ENCODE measurements at regions of chr20 and their contacts with region 1.

Region 1: GRCh38 chr20:60210779-60211617 is 252.8 kb downstream of the CDH26 start:
- DNase-seq: peak in 4 of 5 donors; percentile 20 to 40 (median 30)
- H3K4me3 ChIP-seq: no peak overlapping the region
- H3K4me3 Mint-ChIP-seq: peak overlapping the region in 1 of 8 donors; percentile 17
- H3K27ac ChIP-seq: no peak overlapping the region
- H3K27ac Mint-ChIP-seq: peak overlapping the region in 1 of 7 donors; percentile 46
- H3K4me1 ChIP-seq: no peaks in the 10 kb centered on the region
- H3K4me1 Mint-ChIP-seq: peaks cover 0 to 6% (median 3%) of the 10 kb centered on the region in 4 donors
- H3K27me3 ChIP-seq: no peaks in the 10 kb centered on the region
- H3K27me3 Mint-ChIP-seq: peaks cover 0 to 7% of the 10 kb centered on the region in 2 donors

Region 2: DNA sequence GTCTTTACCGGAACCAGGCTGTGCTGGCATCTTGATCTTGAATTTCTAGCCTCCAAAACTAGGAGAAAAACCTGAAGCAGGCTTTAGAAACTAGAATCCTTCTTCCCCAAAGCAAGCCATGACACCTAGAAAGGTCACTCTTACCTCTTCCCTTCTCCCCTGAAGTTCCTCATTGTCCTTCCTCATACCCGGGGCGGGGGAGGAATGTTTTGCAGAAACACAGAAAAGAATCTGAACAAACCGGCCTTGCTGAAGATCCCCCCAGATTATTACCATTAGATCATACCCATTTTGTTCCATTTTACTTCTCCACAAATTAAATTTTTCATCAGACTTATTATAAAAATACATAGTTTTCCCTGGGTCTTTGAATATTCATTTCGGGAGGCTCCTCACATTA is 20.9 kb before region 1 on chr20:
- CTCF ChIA-PET with region 1: no interaction called
- POLR2A ChIA-PET with region 1: no interaction called
- intact Hi-C with region 1: no loop called
- DNase-seq: no peak
- H3K4me3 ChIP-seq: no peak overlapping the region
- H3K4me3 Mint-ChIP-seq: no peak overlapping the region
- H3K27ac ChIP-seq: no peak overlapping the region
- H3K27ac Mint-ChIP-seq: no peak overlapping the region
- H3K4me1 ChIP-seq: no peaks in the 10 kb centered on the region
- H3K4me1 Mint-ChIP-seq: no peaks in the 10 kb centered on the region
- H3K27me3 ChIP-seq: no peaks in the 10 kb centered on the region
- H3K27me3 Mint-ChIP-seq: no peaks in the 10 kb centered on the region

Region 3: GRCh38 chr20:60262967-60263603 is 52.1 kb after region 1 on chr20:
- CTCF ChIA-PET with region 1: interaction called, 17 read pairs
- POLR2A ChIA-PET with region 1: no interaction called
- intact Hi-C with region 1: loop called (anchors 2 kb)
- DNase-seq: peak in 4 of 5 donors; percentile 46 to 56 (median 50)
- H3K4me3 ChIP-seq: no peak overlapping the region
- H3K4me3 Mint-ChIP-seq: no peak overlapping the region
- H3K27ac ChIP-seq: no peak overlapping the region
- H3K27ac Mint-ChIP-seq: peak overlapping the region in 2 of 7 donors; percentile 19 to 38
- H3K4me1 ChIP-seq: peaks cover 18% of the 10 kb centered on the region
- H3K4me1 Mint-ChIP-seq: peaks cover 1 to 26% (median 14%) of the 10 kb centered on the region in 4 donors
- H3K27me3 ChIP-seq: no peaks in the 10 kb centered on the region
- H3K27me3 Mint-ChIP-seq: no peaks in the 10 kb centered on the region

Region 4: GRCh38 chr20:61230166-61230565 is 1019.2 kb after region 1 on chr20:
- CTCF ChIA-PET with region 1: interaction called, 13 read pairs
- POLR2A ChIA-PET with region 1: no interaction called
- intact Hi-C with region 1: no loop called
- DNase-seq: no peak
- H3K4me3 ChIP-seq: no peak overlapping the region
- H3K4me3 Mint-ChIP-seq: no peak overlapping the region
- H3K27ac ChIP-seq: no peak overlapping the region
- H3K27ac Mint-ChIP-seq: no peak overlapping the region
- H3K4me1 ChIP-seq: no peaks in the 10 kb centered on the region
- H3K4me1 Mint-ChIP-seq: peaks cover 1 to 4% (median 3%) of the 10 kb centered on the region in 4 donors
- H3K27me3 ChIP-seq: no peaks in the 10 kb centered on the region
- H3K27me3 Mint-ChIP-seq: peaks cover 4 to 12% of the 10 kb centered on the region in 2 donors

Measured in CD4-positive, alpha-beta memory T cell (primary cell).